PC-9 (cell line): ENCODE measurements at regions of chr15 and their contacts with region 1.

Region 1: GRCh38 chr15:98428253-98428989 is 219.9 kb upstream of the IGF1R start:
- DNase-seq: peak in 1 of 2 experiments; percentile 73
- H3K4me3 ChIP-seq: peak overlapping the region; percentile 50; the same call in 1 of the 2 replicates
- H3K27ac ChIP-seq: no peak overlapping the region
- H3K4me1 ChIP-seq: no peaks in the 10 kb centered on the region; the same call in 1 of the 2 replicates
- H3K27me3 ChIP-seq: peaks cover 42% of the 10 kb centered on the region
- CTCF ChIP-seq: peak; percentile 78

Region 2: GRCh38 chr15:98311566-98312188 is 116.7 kb before region 1 on chr15:
- CTCF ChIA-PET with region 1: no interaction called
- POLR2A ChIA-PET with region 1: no interaction called
- intact Hi-C with region 1: loop called (anchors 2 kb)
- DNase-seq: peak in 1 of 2 experiments; percentile 52
- H3K4me3 ChIP-seq: no peak overlapping the region
- H3K27ac ChIP-seq: no peak overlapping the region
- H3K4me1 ChIP-seq: no peaks in the 10 kb centered on the region
- H3K27me3 ChIP-seq: peaks cover 30% of the 10 kb centered on the region
- CTCF ChIP-seq: peak; percentile 88

Region 3: DNA sequence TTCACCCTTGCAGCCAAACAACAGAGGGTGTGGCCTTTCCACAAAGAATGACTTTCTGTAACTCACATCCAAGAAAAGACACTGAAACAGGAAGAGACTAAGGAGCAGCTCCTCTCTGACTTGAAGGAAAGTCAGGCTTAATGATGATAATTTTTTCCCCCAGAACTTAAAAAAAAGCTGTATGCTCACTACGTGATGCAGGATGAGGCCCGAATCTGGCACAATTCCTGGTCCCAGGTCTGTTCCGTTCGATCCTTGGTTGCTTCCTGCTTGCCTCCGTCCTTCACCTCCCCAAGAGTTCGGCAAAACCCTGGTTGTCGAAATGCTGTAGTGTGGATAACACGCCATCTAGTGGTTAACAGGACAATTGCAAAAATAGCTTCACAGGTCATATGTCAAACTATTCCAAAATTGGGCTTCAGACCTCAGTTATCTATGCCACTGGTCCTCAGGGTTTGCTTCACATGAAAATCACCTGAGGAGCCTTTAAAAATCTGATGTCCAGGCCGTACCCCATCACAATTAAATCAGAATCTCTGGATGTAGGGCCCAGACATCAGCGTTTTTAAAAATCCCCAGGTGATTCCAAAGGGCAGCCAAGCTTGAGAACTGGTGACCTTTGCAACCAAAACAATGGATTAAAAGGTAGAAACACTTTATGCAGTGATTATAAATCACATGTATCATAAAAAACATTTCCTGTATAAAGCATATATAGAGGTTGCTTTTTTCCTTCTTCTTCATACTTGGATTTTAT is 648.3 kb after region 1 on chr15:
- CTCF ChIA-PET with region 1: interaction called, 3 read pairs
- POLR2A ChIA-PET with region 1: no interaction called
- intact Hi-C with region 1: loop called (anchors 1 kb)
- DNase-seq: peak; percentile 51 to 58
- H3K4me3 ChIP-seq: peak overlapping the region; percentile 51; the same call in 1 of the 2 replicates
- H3K27ac ChIP-seq: no peak overlapping the region
- H3K4me1 ChIP-seq: no peaks in the 10 kb centered on the region
- H3K27me3 ChIP-seq: no peaks in the 10 kb centered on the region
- CTCF ChIP-seq: peak; percentile 92